Ovary (tissue), 10 donors: ENCODE measurements at regions of chr10 and their contacts with region 1.

Region 1: GRCh38 chr10:29881336-29881771 is 178.0 kb downstream of the JCAD start:
- DNase-seq: peak in 4 of 5 donors; percentile 40 to 65 (median 56)
- H3K4me3 ChIP-seq: no peak overlapping the region
- H3K27ac ChIP-seq: no peak overlapping the region
- H3K4me1 ChIP-seq: no peaks in the 10 kb centered on the region
- H3K27me3 ChIP-seq: no peaks in the 10 kb centered on the region
- CTCF ChIP-seq: no peak
- EP300 ChIP-seq: no peak
- POLR2A ChIP-seq: no peak

Region 2: DNA sequence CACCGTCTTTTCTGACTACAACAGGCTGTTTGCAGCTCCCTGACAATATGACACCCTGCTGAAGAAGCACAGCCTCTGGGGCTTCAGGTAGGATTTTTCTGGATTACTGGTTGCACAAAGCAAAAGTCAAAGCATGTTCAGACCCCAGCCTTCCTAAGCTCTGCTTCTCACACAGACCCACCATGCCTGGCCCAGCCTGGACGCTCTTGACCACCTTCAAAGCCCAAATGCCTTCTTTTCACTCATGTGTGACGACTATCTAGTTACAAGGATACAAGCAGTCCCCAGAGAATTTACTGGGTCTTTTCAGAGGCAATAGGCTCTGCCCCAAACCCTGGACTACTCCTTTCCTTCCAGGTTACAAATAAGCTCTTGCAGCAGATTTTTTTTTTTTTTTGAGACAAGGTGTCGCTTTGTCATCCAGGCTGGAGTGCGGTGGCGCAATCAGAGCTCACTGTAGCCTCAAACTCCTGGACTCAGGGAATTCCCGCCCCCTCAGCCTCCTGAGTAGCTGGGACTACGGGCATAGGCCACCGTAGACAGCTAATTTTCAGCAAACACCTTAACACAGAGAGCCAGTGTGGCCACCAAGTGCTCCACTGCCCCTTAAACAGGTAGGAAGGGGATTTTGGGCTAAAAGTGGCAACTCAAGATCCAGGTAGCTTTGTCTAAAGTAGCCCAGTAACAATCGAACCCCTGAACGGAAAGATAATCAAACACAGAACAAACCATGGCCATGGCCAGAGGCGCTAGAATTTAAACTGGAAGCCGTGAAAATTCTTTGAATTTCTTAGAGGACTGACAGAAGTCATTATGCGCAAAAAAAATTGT is 262.8 kb before region 1 on chr10:
- intact Hi-C with region 1: loop called in 1 of 4 experiments (anchors 10 kb)
- DNase-seq: peak in 3 of 5 donors; percentile 50 to 73 (median 52)
- H3K4me3 ChIP-seq: peak overlapping the region; percentile 13
- H3K27ac ChIP-seq: peak overlapping the region; percentile 66 to 96
- H3K4me1 ChIP-seq: peaks cover 24% of the 10 kb centered on the region
- H3K27me3 ChIP-seq: no peaks in the 10 kb centered on the region
- CTCF ChIP-seq: no peak
- EP300 ChIP-seq: no peak
- POLR2A ChIP-seq: no peak